ENCODE measurements at regions of chr7 and their contacts with region 1.

Region 1: DNA sequence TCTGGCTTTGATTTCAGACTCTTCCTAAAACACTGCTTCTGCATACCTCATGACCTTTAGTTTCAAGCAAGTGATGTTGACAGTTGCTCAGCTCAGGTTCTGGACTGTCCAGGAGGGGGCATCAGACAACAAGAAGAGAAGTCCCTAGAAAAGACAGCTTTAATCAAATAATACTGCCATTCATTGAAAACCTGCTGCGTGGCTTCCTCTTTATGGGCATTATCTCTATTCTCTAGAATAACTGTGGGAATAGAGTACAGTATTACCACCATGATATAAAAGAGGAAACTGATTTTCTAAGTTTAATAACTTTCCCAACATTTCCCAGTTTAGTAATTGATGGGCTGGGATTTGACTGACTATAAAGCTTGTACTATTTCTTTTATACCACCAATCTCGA is 170.4 kb downstream of the SNX13 start:
- DNase-seq: peak; percentile 45
- CTCF ChIP-seq: peak; percentile 86

Region 2: DNA sequence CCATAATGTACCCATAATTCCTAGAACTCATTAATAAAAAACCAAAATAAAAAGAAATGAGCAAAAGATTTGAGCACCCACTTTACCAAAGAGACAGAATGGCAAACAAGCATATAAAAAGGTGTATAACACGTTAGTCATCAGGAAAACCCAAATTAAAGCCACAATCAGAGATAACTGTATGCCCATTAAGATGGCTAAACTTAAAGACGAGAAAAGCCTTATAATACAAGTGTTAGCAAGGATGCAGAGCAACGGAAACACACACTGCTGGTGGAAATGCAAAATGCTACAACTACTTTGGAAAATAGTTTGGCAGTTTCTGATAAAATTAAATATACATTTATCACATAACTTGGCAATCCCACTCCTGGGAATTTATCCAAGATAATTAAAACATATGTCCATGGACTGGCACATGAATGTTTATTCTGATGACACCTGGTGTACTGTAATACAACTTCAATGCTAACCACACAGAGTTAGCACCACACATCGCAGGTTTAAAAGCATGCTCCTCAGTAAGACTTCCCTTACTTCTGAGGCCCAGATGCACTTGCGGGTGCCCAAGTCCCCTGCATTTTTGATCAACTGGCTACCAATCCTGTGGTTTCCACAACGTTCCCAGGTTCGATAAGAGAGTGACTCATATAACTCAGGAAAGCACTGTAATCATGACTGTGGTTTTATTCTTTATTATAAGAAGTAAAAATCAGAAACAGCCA is 11.7 kb after region 1 on chr7:
- CTCF ChIA-PET with region 1: interaction called, 10 read pairs
- POLR2A ChIA-PET with region 1: no interaction called
- DNase-seq: no peak
- CTCF ChIP-seq: no peak

Region 3: DNA sequence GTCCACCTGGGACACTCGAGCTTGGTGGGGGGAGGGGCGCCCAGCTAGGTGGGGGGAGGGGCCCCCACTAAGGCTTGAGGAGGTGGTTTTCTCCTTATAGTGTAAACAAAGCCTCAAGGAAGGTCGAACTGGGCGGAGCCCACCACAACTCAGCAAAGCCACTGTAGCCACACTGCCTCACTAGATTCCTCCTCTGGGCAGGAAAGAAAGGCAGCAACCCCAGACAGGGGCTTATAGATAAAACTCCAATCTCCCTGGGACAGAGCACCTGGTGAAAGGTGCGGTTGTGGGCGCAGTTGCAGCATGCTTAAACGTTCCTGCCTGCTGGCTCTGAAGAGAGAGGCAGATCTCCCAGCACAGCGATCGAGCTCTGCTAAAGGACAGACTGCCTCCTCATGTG is 37.3 kb after region 1 on chr7:
- CTCF ChIA-PET with region 1: interaction called, 11 read pairs
- POLR2A ChIA-PET with region 1: no interaction called
- DNase-seq: no peak
- CTCF ChIP-seq: no peak

Region 4: GRCh38 chr7:18320971-18321567 is 551.2 kb after region 1 on chr7:
- CTCF ChIA-PET with region 1: interaction called, 26 read pairs
- POLR2A ChIA-PET with region 1: no interaction called
- DNase-seq: peak; percentile 32
- CTCF ChIP-seq: peak; percentile 24

Measured in GM10248 (cell line).